ENCODE measurements at regions of chr6 and their contacts with region 1.

Region 1: GRCh38 chr6:188821-189655 is 103.2 kb upstream of the DUSP22 start:
- DNase-seq: peak; percentile 54 to 87 (median 79)
- ATAC-seq: peak; percentile 84
- H3K4me3 ChIP-seq: no peak overlapping the region
- H3K4me3 Mint-ChIP-seq: no peak overlapping the region
- H3K27ac ChIP-seq: peak overlapping the region in 1 of 2 experiments; percentile 79
- H3K27ac Mint-ChIP-seq: peak overlapping the region; percentile 62
- H3K4me1 ChIP-seq: peaks cover 17% of the 10 kb centered on the region
- H3K4me1 Mint-ChIP-seq: peaks cover 31% of the 10 kb centered on the region
- H3K27me3 ChIP-seq: no peaks in the 10 kb centered on the region
- H3K27me3 Mint-ChIP-seq: no peaks in the 10 kb centered on the region
- CTCF ChIP-seq: peak; percentile 77

Region 2: GRCh38 chr6:277746-278145 is 88.7 kb after region 1 on chr6:
- CTCF ChIA-PET with region 1: no interaction called
- POLR2A ChIA-PET with region 1: no interaction called
- intact Hi-C with region 1: no loop called
- DNase-seq: no peak
- ATAC-seq: no peak
- H3K4me3 ChIP-seq: no peak overlapping the region
- H3K4me3 Mint-ChIP-seq: no peak overlapping the region
- H3K27ac ChIP-seq: no peak overlapping the region
- H3K27ac Mint-ChIP-seq: no peak overlapping the region
- H3K4me1 ChIP-seq: no peaks in the 10 kb centered on the region
- H3K4me1 Mint-ChIP-seq: peaks cover 3% of the 10 kb centered on the region
- H3K27me3 ChIP-seq: no peaks in the 10 kb centered on the region
- H3K27me3 Mint-ChIP-seq: no peaks in the 10 kb centered on the region
- CTCF ChIP-seq: no peak

Region 3: GRCh38 chr6:291697-292505 is 102.9 kb after region 1 on chr6 and contains the start of gene DUSP22:
- CTCF ChIA-PET with region 1: interaction called, 8 read pairs
- POLR2A ChIA-PET with region 1: no interaction called
- intact Hi-C with region 1: loop called (anchors 1 to 2 kb)
- DNase-seq: peak; percentile 50 to 95 (median 81)
- ATAC-seq: peak; percentile 55
- H3K4me3 ChIP-seq: peak within 1 kb of the TSS; percentile 64 to 65
- H3K4me3 Mint-ChIP-seq: peak within 1 kb of the TSS; percentile 95
- H3K27ac ChIP-seq: peak within 1 kb of the TSS; percentile 55 to 85
- H3K27ac Mint-ChIP-seq: peak within 1 kb of the TSS; percentile 98
- H3K4me1 ChIP-seq: peaks cover 26% of the 10 kb centered on the region
- H3K4me1 Mint-ChIP-seq: peaks cover 51% of the 10 kb centered on the region
- H3K27me3 ChIP-seq: no peaks in the 10 kb centered on the region
- H3K27me3 Mint-ChIP-seq: no peaks in the 10 kb centered on the region
- CTCF ChIP-seq: no peak
- total RNA-seq, gene DUSP22: 19.9 to 22.1 TPM

Region 4: DNA sequence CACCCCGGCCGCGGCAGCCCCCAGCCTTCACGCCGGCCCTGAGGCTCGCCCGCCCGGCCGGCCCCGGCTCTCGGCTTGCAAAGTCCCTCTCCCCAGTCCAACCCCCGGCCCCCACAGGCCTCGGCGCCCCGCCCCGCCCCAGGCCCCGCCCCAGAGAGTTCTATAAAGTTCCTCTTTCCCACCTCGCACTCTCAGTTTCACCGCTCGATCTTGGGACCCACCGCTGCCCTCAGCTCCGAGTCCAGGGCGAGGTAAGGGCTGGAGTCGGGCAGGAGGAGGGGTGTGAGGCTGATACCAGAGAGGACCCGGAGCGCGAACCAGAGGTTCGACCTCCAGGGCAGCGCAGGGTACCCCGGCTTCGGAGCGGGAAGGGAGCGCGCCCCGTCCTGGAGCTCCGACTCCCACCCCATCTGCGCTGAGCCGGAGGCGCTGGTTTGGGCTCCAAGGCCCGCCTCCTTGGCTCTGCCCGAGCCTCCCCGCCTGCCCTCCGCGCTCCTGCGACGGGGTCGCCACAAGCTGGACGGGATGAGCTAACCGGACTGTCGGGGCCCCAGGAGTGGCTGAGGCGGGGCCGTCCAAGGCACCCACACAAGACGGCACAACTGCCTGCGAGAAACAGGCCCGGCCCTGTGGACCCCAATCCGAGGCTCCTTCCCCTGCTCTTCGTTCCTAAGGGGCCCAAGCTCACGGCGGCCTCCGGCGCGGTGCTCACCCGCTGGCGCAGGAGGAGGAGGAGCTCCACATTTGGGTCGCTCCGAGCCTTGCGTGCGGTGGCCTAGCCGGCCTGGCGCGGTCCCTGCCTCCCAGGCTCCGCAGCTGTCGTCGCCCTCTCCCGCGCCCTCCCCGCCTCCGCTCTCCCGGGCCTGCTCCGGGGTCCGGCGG is 202.8 kb after region 1 on chr6 and contains the start of gene IRF4:
- CTCF ChIA-PET with region 1: interaction called, 7 read pairs
- POLR2A ChIA-PET with region 1: no interaction called
- intact Hi-C with region 1: loop called in 1 of 2 experiments (anchors 2 kb)
- DNase-seq: peak in 6 of 9 experiments; percentile 32 to 59 (median 36)
- ATAC-seq: peak; percentile 39
- H3K4me3 ChIP-seq: peak within 1 kb of the TSS; percentile 77 to 78
- H3K4me3 Mint-ChIP-seq: peak within 1 kb of the TSS; percentile 93
- H3K27ac ChIP-seq: no peak within 1 kb of the TSS
- H3K27ac Mint-ChIP-seq: peak within 1 kb of the TSS; percentile 85
- H3K4me1 ChIP-seq: peaks cover 17% of the 10 kb centered on the region
- H3K4me1 Mint-ChIP-seq: peaks cover 28% of the 10 kb centered on the region
- H3K27me3 ChIP-seq: peaks cover 0 to 10% of the 10 kb centered on the region in 2 experiments
- H3K27me3 Mint-ChIP-seq: peaks cover 7% of the 10 kb centered on the region
- CTCF ChIP-seq: no peak
- total RNA-seq, gene IRF4: 24.7 to 25.6 TPM

Region 5: DNA sequence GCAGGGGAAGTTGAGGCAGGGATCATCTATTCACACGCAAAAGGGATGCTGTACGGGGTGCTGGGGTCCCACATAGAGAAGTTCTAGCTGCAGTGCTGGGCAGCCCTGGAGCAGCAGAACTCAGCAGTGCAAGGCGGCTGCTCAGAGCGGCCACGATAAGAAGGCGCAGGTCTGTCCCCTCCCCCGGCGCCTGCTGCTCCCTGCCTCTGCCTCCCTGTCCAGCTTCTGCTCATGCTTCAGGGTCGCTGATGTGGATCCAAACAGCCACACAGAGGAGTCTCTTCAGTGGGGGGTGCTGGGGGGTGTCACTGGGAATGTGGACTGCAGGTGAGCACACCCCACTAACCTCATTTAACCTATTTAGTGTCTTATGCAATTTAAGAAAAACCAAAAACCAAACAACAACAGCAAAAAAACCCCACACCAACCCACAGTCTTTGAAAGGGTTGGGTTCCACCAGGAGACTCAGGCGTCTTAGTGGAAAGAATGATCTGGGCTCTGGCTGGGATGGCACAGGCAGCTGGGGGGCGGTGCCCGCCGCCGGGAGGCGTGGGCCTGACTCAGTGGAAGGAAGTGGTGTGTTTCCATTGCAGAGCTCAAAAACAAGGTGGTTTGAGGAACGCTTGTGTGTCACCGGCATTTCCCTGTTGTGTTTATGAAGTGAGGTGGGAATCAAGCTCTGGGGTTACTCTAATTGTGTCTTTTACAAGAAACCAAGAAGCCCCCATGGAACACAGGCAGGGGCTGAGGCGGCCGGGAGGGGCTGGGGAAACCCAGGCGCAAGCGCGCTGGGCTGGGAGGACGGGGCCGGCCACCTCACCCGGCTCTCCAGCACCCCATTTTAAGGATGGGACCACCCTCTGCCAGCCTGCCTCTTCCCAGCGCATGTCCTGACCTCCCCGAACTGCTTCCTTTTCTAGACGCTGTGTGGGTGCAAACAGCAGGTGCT is 257.7 kb after region 1 on chr6:
- CTCF ChIA-PET with region 1: no interaction called
- POLR2A ChIA-PET with region 1: no interaction called
- intact Hi-C with region 1: loop called in 1 of 2 experiments (anchors 2 kb)
- DNase-seq: peak in 8 of 9 experiments; percentile 72 to 90 (median 80)
- ATAC-seq: peak; percentile 76
- H3K4me3 ChIP-seq: peak overlapping the region; percentile 37 to 43
- H3K4me3 Mint-ChIP-seq: peak overlapping the region; percentile 71
- H3K27ac ChIP-seq: no peak overlapping the region
- H3K27ac Mint-ChIP-seq: peak overlapping the region; percentile 88
- H3K4me1 ChIP-seq: peaks cover 43% of the 10 kb centered on the region
- H3K4me1 Mint-ChIP-seq: peaks cover 48% of the 10 kb centered on the region
- H3K27me3 ChIP-seq: no peaks in the 10 kb centered on the region
- H3K27me3 Mint-ChIP-seq: no peaks in the 10 kb centered on the region
- CTCF ChIP-seq: no peak

Region 6: DNA sequence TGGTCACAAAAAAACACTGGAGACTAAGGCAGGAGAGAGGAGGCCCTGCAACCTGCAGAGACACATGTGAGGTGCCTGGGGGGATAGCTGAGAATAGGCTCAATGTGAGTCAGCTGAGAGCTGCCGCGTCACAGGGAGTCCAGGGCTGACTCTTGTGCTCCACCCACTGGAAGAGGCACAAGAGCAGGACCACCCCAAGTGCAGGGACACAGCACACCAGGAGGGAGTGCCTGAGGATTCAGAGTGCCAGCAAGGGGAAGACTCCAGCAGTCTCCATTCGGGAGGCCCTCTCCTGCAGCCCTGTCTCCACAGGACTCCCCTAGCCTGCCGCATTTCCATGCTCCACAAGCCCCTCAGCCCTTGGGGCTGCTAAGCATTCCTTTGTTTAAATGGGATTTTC is 362.4 kb after region 1 on chr6:
- CTCF ChIA-PET with region 1: interaction called, 10 read pairs
- POLR2A ChIA-PET with region 1: no interaction called
- intact Hi-C with region 1: no loop called
- DNase-seq: peak in 3 of 9 experiments; percentile 9 to 35 (median 14)
- ATAC-seq: no peak
- H3K4me3 ChIP-seq: no peak overlapping the region
- H3K4me3 Mint-ChIP-seq: no peak overlapping the region
- H3K27ac ChIP-seq: no peak overlapping the region
- H3K27ac Mint-ChIP-seq: peak overlapping the region; percentile 37
- H3K4me1 ChIP-seq: peaks cover 7% of the 10 kb centered on the region
- H3K4me1 Mint-ChIP-seq: peaks cover 11% of the 10 kb centered on the region
- H3K27me3 ChIP-seq: no peaks in the 10 kb centered on the region
- H3K27me3 Mint-ChIP-seq: no peaks in the 10 kb centered on the region
- CTCF ChIP-seq: no peak

Region 7: GRCh38 chr6:722077-722524 is 533.1 kb after region 1 on chr6:
- CTCF ChIA-PET with region 1: no interaction called
- POLR2A ChIA-PET with region 1: no interaction called
- intact Hi-C with region 1: loop called in 1 of 2 experiments (anchors 5 kb)
- DNase-seq: peak; percentile 36 to 79 (median 71)
- ATAC-seq: peak; percentile 81
- H3K4me3 ChIP-seq: no peak overlapping the region
- H3K4me3 Mint-ChIP-seq: peak overlapping the region; percentile 16
- H3K27ac ChIP-seq: no peak overlapping the region
- H3K27ac Mint-ChIP-seq: no peak overlapping the region
- H3K4me1 ChIP-seq: no peaks in the 10 kb centered on the region
- H3K4me1 Mint-ChIP-seq: peaks cover 3% of the 10 kb centered on the region
- H3K27me3 ChIP-seq: no peaks in the 10 kb centered on the region
- H3K27me3 Mint-ChIP-seq: peaks cover 6% of the 10 kb centered on the region
- CTCF ChIP-seq: peak; percentile 86

Region 8: DNA sequence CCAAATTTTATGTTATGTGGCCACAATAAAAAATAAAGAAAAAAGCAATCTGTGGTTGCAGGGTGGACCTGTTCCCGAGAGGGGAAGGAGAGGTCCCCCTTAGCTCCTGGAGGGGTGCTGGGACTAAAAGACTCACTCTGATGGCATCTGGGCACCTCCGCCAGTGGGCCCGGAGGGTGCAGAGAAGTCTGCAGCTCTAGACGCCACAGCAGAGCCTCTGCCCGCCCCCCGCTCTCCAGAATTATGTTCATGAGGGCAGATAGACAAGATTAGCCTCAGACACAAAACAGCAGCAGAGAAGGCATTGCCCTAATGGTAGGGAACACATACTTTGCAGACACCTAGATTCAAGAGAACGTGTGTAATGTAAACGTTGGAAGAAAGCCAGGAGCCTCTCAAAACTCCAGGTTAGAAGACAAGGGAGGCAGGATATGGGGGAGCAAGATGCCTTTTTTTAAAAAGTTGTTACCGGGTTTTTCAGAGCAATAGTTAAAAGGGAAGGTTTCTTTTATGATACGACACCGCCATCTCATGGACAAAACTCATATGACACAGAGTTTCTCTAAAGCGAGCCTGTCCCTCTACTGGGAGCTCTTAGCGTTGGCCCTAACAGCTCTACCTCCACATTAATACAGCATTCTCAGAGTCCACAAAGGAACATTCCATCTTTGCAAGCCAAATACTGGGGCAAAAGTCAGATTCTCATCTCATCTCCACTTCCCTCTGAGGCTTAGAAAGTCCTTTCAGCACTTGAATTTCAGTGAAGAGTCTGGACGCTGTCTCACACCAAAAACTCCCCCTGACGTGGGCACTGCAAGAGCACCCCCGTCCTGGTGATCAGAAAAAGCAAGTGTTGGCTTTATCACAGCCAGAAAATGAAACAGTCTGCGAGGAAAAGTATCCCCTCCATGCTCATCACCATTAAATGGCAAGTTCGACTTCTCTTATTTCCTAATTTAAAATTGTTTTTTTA is 1247.6 kb after region 1 on chr6:
- CTCF ChIA-PET with region 1: no interaction called
- POLR2A ChIA-PET with region 1: no interaction called
- intact Hi-C with region 1: loop called in 1 of 2 experiments (anchors 5 kb)
- DNase-seq: peak in 6 of 9 experiments; percentile 6 to 67 (median 41)
- ATAC-seq: peak; percentile 71
- H3K4me3 ChIP-seq: no peak overlapping the region
- H3K4me3 Mint-ChIP-seq: no peak overlapping the region
- H3K27ac ChIP-seq: no peak overlapping the region
- H3K27ac Mint-ChIP-seq: no peak overlapping the region
- H3K4me1 ChIP-seq: no peaks in the 10 kb centered on the region
- H3K4me1 Mint-ChIP-seq: no peaks in the 10 kb centered on the region
- H3K27me3 ChIP-seq: peaks cover 0 to 4% of the 10 kb centered on the region in 2 experiments
- H3K27me3 Mint-ChIP-seq: peaks cover 33% of the 10 kb centered on the region
- CTCF ChIP-seq: peak; percentile 70